B cell (primary cell): ENCODE measurements at regions of chr5 and their contacts with region 1.

Region 1: DNA sequence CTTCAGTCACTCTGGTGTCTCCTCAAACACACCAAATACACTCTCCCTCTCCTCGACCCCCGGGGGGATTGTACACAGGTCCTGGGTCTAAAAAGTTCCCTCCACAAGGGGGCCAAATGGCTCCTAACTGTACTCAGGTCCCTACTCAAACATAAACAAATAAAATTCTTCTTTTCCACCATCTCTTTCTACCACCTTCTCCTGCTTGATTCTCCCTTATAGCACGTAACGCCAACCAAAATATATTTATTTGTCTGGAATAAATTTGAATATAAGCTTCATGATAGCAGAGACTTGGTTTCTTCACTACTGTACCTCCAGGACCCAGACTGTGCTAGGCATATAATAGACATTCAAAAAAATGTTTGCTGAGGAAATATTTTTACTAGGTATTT is 21.4 kb downstream of the ZNF608 start:
- DNase-seq: peak; percentile 54
- ATAC-seq: peak; percentile 71
- H3K4me3 ChIP-seq: peak overlapping the region in 3 of 5 experiments; percentile 6 to 27 (median 12)
- H3K4me3 Mint-ChIP-seq: peak overlapping the region; percentile 81
- H3K27ac ChIP-seq: no peak overlapping the region
- H3K27ac Mint-ChIP-seq: peak overlapping the region; percentile 76
- H3K4me1 ChIP-seq: peaks cover 11 to 19% of the 10 kb centered on the region in 2 donors
- H3K4me1 Mint-ChIP-seq: peaks cover 63% of the 10 kb centered on the region
- H3K27me3 ChIP-seq: no peaks in the 10 kb centered on the region
- H3K27me3 Mint-ChIP-seq: no peaks in the 10 kb centered on the region
- CTCF ChIP-seq: peak; percentile 64

Region 2: GRCh38 chr5:124653666-124654065 is 71.4 kb before region 1 on chr5:
- CTCF ChIA-PET with region 1: no interaction called
- POLR2A ChIA-PET with region 1: no interaction called
- intact Hi-C with region 1: no loop called
- DNase-seq: no peak
- ATAC-seq: no peak
- H3K4me3 ChIP-seq: no peak overlapping the region
- H3K4me3 Mint-ChIP-seq: no peak overlapping the region
- H3K27ac ChIP-seq: no peak overlapping the region
- H3K27ac Mint-ChIP-seq: no peak overlapping the region
- H3K4me1 ChIP-seq: peaks cover 67 to 81% of the 10 kb centered on the region in 2 donors
- H3K4me1 Mint-ChIP-seq: peaks cover 53% of the 10 kb centered on the region
- H3K27me3 ChIP-seq: peaks cover 0 to 13% (median 0%) of the 10 kb centered on the region in 4 experiments
- H3K27me3 Mint-ChIP-seq: no peaks in the 10 kb centered on the region
- CTCF ChIP-seq: no peak

Region 3: DNA sequence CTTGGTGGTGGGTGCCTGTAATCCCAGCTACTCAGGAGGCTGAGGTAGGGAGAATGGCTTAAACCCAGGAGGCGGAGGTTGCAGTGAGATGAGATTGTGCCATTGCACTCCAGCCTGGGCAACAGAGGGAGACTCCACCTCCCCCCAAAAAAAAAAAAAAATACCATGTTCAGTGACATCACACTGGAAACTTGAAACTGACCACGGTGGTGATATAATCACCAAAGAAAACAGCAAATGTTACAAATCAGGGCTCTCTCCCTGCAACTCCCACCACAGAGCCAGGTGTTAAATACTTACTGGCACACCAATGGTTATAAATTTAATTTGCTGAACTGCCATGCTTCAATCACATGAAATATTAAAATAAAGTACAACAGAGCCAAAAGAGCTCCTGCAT is 60.0 kb before region 1 on chr5:
- CTCF ChIA-PET with region 1: no interaction called
- POLR2A ChIA-PET with region 1: no interaction called
- intact Hi-C with region 1: no loop called
- DNase-seq: no peak
- ATAC-seq: no peak
- H3K4me3 ChIP-seq: no peak overlapping the region
- H3K4me3 Mint-ChIP-seq: no peak overlapping the region
- H3K27ac ChIP-seq: no peak overlapping the region
- H3K27ac Mint-ChIP-seq: no peak overlapping the region
- H3K4me1 ChIP-seq: peaks cover 5 to 22% of the 10 kb centered on the region in 2 donors
- H3K4me1 Mint-ChIP-seq: peaks cover 39% of the 10 kb centered on the region
- H3K27me3 ChIP-seq: no peaks in the 10 kb centered on the region
- H3K27me3 Mint-ChIP-seq: no peaks in the 10 kb centered on the region
- CTCF ChIP-seq: no peak

Region 4: DNA sequence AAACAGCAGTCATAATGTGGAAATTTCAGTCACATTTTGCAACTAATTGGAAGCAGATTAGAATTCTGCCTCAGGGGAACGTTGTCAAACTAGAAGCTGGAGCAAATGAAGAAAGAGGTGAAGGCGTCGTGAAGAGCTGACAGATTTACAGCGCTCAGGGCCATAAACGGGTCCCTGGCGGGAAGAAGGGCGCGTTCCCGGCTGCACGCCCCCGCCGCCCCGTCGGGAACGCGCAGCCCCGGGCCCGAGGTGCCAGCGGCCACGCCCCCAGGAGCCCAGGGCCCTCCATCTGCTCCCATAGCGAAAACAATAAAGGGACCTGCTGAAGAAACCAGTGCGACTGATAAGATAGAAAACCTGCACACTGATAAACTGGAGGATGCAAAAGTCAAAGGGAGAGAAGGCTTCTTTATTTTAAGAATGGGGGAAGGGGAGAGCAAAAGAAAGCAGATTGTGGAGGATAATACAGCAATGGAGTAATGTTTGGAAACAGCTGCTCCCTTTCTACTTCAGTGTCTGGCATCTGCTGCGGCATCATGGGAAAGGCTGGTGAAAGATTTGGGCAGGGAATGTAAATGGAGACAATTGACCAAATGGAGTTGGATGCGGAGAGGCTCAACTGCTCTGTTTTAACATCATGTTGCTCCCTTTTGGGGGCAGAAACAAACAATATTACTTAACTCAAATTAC is 10.3 kb after region 1 on chr5:
- CTCF ChIA-PET with region 1: interaction called, 4 read pairs
- POLR2A ChIA-PET with region 1: no interaction called
- intact Hi-C with region 1: loop called (anchors 1 kb)
- DNase-seq: peak; percentile 40
- ATAC-seq: peak; percentile 45
- H3K4me3 ChIP-seq: peak overlapping the region; percentile 10 to 59 (median 44)
- H3K4me3 Mint-ChIP-seq: peak overlapping the region; percentile 83
- H3K27ac ChIP-seq: no peak overlapping the region
- H3K27ac Mint-ChIP-seq: peak overlapping the region; percentile 3
- H3K4me1 ChIP-seq: peaks cover 58 to 62% of the 10 kb centered on the region in 2 donors
- H3K4me1 Mint-ChIP-seq: peaks cover 74% of the 10 kb centered on the region
- H3K27me3 ChIP-seq: peaks cover 0 to 3% (median 0%) of the 10 kb centered on the region in 4 experiments
- H3K27me3 Mint-ChIP-seq: peaks cover 4% of the 10 kb centered on the region
- CTCF ChIP-seq: no peak